A549 (cell line): ENCODE measurements at regions of chr12 and their contacts with region 1.

Region 1: GRCh38 chr12:56688129-56688845 is at the start of gene PTGES3:
- DNase-seq: peak; percentile 95 to 99
- ATAC-seq: peak; percentile 87 to 92
- H3K4me3 ChIP-seq: peak within 1 kb of the TSS; percentile 82
- H3K27ac ChIP-seq: peak within 1 kb of the TSS; percentile 97 to 98
- H3K4me1 ChIP-seq: peaks cover 18% of the 10 kb centered on the region; the same call in 2 of the 3 replicates
- CTCF ChIP-seq: no peak
- EP300 ChIP-seq: no peak
- POLR2A ChIP-seq: peak; percentile 84; the same call in 1 of the 2 replicates
- RAD21 ChIP-seq: no peak
- polyA plus RNA-seq, gene PTGES3: 211 and 272 TPM in 2 replicates

Region 2: DNA sequence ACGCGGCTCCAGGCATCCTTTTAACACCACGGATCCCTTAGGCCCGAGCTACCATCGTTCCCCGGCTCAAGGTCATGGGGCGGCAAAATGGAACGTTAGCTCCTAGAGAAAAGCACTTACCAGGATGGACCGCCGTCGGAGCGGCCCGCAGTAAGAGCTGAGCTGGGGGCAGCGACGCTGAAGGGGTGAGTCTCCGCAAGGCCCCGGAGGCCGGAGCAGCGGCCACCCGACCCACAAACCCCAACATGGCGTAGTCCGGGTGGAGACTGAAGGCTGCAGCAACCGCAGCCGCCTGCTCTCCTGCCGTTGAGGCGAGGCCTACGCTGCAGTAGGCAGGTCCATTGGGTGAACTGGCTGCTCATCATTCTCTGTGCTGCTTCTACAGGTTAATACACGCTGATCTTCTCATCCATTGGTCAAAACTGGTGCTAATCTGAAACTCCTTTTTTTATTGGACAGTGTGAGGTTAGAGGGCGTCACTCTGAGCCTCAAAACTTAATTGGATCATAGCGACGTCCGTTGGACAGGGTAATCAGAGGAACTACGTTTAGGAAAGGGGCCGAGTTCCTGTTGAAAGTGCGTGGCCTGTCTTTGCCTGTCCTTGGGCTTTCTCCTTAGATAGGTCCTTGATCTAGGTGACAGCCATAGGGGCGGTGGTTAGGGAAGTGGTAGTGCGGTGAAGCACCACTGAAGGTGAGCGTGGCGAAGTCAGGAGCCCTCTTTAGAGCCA is 42.4 kb before region 1 on chr12 and contains the start of gene ATP5F1B:
- CTCF ChIA-PET with region 1: interaction called, 3 read pairs
- POLR2A ChIA-PET with region 1: interaction called, 22 read pairs
- DNase-seq: peak; percentile 100
- ATAC-seq: peak; percentile 100
- H3K4me3 ChIP-seq: peak within 1 kb of the TSS; percentile 78
- H3K27ac ChIP-seq: peak within 1 kb of the TSS; percentile 88 to 91
- H3K4me1 ChIP-seq: peaks cover 17% of the 10 kb centered on the region; the same call in 2 of the 3 replicates
- CTCF ChIP-seq: no peak
- EP300 ChIP-seq: no peak
- POLR2A ChIP-seq: peak; percentile 99
- RAD21 ChIP-seq: no peak
- polyA plus RNA-seq, gene ATP5F1B: 1,500 and 1,639 TPM in 2 replicates

Region 3: GRCh38 chr12:56677680-56678079 is 10.6 kb before region 1 on chr12:
- CTCF ChIA-PET with region 1: interaction called, 3 read pairs
- POLR2A ChIA-PET with region 1: interaction called, 12 read pairs
- DNase-seq: no peak
- ATAC-seq: no peak
- H3K4me3 ChIP-seq: no peak overlapping the region
- H3K27ac ChIP-seq: no peak overlapping the region
- H3K4me1 ChIP-seq: peaks cover 48% of the 10 kb centered on the region
- CTCF ChIP-seq: no peak
- EP300 ChIP-seq: no peak
- POLR2A ChIP-seq: no peak
- RAD21 ChIP-seq: no peak

Region 4: DNA sequence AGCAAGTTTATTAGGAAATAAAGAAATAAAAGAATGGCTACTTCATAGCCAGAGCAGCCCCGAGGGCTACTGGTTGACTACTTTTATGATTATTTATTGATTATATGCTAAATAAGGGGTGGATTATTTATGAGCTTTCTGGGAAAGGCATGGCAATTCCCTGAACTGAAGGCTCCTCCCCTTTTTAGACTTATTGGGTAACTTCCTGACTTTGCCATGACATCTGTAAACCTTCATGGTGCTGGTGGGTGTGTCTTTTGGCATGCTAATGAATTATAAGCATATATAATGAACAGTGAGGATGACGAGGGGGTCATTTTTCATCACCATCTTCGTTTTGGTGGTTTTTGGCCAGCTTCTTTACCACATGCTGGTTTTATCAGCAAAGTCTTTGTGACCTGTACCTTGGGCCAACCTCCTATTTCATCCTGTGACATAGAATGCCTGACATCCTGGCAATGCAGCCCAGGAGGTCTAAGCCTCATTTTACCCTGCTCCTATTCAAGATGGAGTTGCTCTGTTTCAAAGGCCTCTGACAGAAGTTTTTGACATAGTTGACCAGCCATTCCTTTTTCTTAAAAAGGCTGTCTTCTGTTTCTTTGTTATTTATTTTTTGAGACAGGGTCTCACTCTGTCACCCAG is 10.9 kb after region 1 on chr12:
- CTCF ChIA-PET with region 1: no interaction called
- POLR2A ChIA-PET with region 1: interaction called, 13 read pairs
- DNase-seq: no peak
- ATAC-seq: no peak
- H3K4me3 ChIP-seq: no peak overlapping the region
- H3K27ac ChIP-seq: no peak overlapping the region
- H3K4me1 ChIP-seq: no peaks in the 10 kb centered on the region
- CTCF ChIP-seq: no peak
- EP300 ChIP-seq: no peak
- POLR2A ChIP-seq: no peak
- RAD21 ChIP-seq: no peak

Region 5: GRCh38 chr12:56709759-56710376 is 21.6 kb after region 1 on chr12:
- CTCF ChIA-PET with region 1: interaction called, 3 read pairs
- POLR2A ChIA-PET with region 1: interaction called, 28 read pairs
- DNase-seq: no peak
- ATAC-seq: peak; percentile 37 to 58; a peak in 5 of 6 replicates
- H3K4me3 ChIP-seq: no peak overlapping the region
- H3K27ac ChIP-seq: no peak overlapping the region
- H3K4me1 ChIP-seq: no peaks in the 10 kb centered on the region
- CTCF ChIP-seq: no peak
- EP300 ChIP-seq: no peak
- POLR2A ChIP-seq: no peak
- RAD21 ChIP-seq: no peak

Region 6: GRCh38 chr12:56716458-56716857 is 28.2 kb after region 1 on chr12:
- CTCF ChIA-PET with region 1: interaction called, 3 read pairs
- POLR2A ChIA-PET with region 1: interaction called, 28 read pairs
- DNase-seq: no peak
- ATAC-seq: no peak
- H3K4me3 ChIP-seq: no peak overlapping the region
- H3K27ac ChIP-seq: no peak overlapping the region
- H3K4me1 ChIP-seq: peaks cover 41% of the 10 kb centered on the region
- CTCF ChIP-seq: no peak
- EP300 ChIP-seq: no peak
- POLR2A ChIP-seq: no peak
- RAD21 ChIP-seq: no peak

Region 7: DNA sequence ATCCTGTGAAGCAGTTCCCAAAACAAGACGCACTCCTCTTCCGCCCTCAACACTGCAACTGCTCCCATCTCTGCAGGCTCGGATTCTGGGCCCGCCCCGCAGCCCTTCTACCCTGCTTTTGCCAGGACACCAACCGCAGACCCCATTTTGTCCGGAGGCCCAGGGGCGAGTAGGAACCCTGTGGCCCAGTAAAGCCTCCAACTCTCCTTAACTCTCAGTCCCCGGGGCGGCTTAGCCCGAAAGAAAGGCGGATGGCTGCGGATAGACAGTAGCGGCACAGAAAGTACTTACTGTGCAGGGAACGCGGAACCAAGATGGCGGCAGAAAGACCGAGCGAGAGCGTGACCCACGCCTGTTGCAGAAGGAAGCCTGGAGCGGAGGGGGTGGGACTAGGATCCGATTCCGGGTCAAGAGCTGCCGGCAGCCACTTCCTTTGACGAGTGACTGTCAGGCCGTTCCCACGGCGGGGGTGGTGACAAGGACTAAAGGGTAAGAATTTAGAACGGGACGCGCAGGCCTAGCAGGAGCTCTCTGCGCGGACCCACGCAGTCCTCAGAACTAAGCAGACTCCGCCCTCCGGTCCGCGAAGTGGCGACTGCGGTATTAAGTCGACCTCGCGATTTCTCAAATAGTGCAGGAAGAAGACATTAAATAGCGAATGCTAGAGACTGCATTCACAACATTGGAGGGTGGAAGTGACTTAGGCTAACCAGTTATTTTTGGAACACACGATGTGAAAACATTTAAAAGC is 36.9 kb after region 1 on chr12 and contains the start of gene NACA:
- CTCF ChIA-PET with region 1: interaction called, 3 read pairs
- POLR2A ChIA-PET with region 1: interaction called, 72 read pairs
- DNase-seq: peak; percentile 99
- ATAC-seq: peak; percentile 97 to 98
- H3K4me3 ChIP-seq: peak within 1 kb of the TSS; percentile 99
- H3K27ac ChIP-seq: peak within 1 kb of the TSS; percentile 96 to 99
- H3K4me1 ChIP-seq: peaks cover 34% of the 10 kb centered on the region
- CTCF ChIP-seq: no peak
- EP300 ChIP-seq: no peak
- POLR2A ChIP-seq: peak; percentile 94
- RAD21 ChIP-seq: no peak
- polyA plus RNA-seq, gene NACA: 993 and 1,560 TPM in 2 replicates